SK-N-SH (cell line): ENCODE measurements at regions of chr20 and their contacts with region 1.

Region 1: GRCh38 chr20:3000852-3001523 is 42.4 kb upstream of the GNRH2 start:
- DNase-seq: peak; percentile 53
- H3K4me3 ChIP-seq: no peak overlapping the region
- H3K27ac ChIP-seq: no peak overlapping the region
- H3K4me1 ChIP-seq: no peaks in the 10 kb centered on the region
- H3K27me3 ChIP-seq: no peaks in the 10 kb centered on the region
- CTCF ChIP-seq: peak; percentile 71
- EP300 ChIP-seq: no peak
- RAD21 ChIP-seq: peak; percentile 83

Region 2: GRCh38 chr20:2984956-2985661 is 15.9 kb before region 1 on chr20:
- CTCF ChIA-PET with region 1: interaction called, 15 read pairs
- POLR2A ChIA-PET with region 1: no interaction called
- DNase-seq: no peak
- H3K4me3 ChIP-seq: no peak overlapping the region
- H3K27ac ChIP-seq: peak overlapping the region; percentile 8 to 26; a peak in 3 of 4 replicates
- H3K4me1 ChIP-seq: peaks cover 10 to 21% of the 10 kb centered on the region in 2 experiments; a peak in 3 of 4 replicates
- H3K27me3 ChIP-seq: no peaks in the 10 kb centered on the region
- CTCF ChIP-seq: no peak
- EP300 ChIP-seq: no peak
- RAD21 ChIP-seq: no peak

Region 3: DNA sequence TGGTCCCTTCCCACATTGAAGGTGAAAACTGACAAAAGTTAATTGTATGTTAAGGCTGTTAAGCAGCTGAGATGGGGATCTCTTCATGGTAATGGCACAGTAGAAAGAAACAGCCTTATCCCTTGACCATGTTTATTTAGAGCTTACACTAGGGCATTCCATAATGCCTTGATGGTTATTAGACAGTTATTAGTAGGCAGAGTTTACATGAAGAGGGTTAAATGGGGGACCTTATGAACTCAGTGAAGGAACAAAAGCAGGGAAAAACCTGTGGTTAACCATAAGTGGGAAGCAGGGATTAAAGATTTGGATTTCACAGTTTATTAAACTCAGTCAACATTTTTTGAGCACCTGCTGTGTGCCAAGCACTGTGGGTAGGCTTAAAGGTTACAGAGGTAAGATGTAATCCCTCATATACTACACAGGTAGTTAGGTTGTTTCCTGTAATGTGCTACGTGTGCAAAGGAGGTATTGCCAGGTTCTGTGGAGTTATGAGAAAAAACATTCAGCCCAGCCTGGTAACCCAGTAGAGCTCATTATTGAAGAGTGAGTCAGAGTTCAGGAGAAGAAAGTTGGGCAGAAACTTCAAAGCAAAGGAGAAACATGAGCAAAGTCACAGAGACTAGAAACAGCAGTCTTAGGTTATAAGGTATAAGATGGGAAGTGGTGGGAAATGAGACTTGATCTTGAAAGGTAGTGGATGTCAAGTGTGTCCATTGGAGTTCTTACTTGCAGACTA is 10.2 kb after region 1 on chr20:
- CTCF ChIA-PET with region 1: interaction called, 15 read pairs
- POLR2A ChIA-PET with region 1: no interaction called
- DNase-seq: no peak
- H3K4me3 ChIP-seq: no peak overlapping the region
- H3K27ac ChIP-seq: peak overlapping the region in 1 of 2 experiments; percentile 23; a peak in 1 of 4 replicates
- H3K4me1 ChIP-seq: no peaks in the 10 kb centered on the region
- H3K27me3 ChIP-seq: no peaks in the 10 kb centered on the region
- CTCF ChIP-seq: no peak
- EP300 ChIP-seq: no peak
- RAD21 ChIP-seq: no peak